ENCODE measurements at regions of chr10 and their contacts with region 1.

Region 1: DNA sequence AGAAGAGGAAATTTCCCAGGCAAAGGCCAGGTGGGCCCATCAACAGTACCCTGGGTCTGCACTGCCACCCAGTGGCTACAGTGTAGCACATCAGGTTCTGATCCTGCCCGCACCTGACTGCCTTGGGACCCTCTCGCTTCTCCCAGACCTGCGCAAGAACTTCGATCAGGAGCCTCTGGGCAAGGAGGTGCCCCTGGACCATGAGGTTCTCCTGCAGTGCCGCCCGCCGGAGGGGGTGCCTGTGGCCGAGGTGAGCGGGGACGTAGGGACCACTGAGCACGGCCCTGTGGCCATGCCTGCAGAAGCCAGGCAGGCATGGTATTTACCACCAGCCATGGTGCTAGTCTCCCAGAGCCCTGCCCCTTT is 33.9 kb upstream of the SLC29A3 start:
- DNase-seq: peak; percentile 41 to 55
- H3K4me3 ChIP-seq: no peak overlapping the region
- H3K27ac ChIP-seq: no peak overlapping the region
- H3K4me1 ChIP-seq: no peaks in the 10 kb centered on the region
- H3K27me3 ChIP-seq: no peaks in the 10 kb centered on the region
- CTCF ChIP-seq: peak; percentile 91

Region 2: DNA sequence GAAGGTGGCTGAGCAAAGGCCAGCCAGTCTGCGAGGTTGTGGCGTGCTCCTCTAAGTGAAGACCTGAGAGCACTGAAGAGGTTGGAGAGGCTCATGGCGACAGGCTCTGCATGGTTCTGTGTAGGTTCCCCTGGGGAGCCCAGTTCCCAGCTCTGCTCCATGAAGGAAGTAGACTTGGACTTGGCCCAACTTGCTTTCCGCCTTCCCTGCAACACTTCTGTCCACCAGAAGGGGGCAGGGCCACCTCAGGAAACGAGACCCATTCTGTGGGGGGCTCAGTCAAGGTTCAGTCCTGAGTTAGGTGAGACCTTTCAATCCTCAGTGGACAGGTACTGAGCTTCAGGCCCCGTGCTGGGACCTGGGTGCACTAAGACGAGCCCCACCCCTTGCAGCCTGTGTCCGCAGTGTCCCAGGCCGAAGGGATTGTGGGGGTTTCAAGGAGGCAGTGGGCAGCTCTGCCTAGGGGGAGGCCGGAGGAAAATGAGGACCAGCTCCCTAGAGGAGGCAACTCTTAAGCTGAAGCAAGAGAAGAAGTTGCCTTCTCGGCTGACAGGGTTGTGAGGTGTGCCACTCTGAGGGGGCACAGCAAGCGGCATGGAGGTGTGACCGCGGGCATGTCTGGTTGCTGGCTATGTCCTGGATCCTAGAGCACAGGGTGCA is 381.8 kb before region 1 on chr10:
- CTCF ChIA-PET with region 1: interaction called, 3 read pairs
- POLR2A ChIA-PET with region 1: interaction called, 5 read pairs
- intact Hi-C with region 1: loop called (anchors 1 kb)
- DNase-seq: peak in 1 of 2 experiments; percentile 55
- H3K4me3 ChIP-seq: no peak overlapping the region
- H3K27ac ChIP-seq: no peak overlapping the region
- H3K4me1 ChIP-seq: 0 out of 2 replicates have a peak, but pooled peaks cover 5% of the 10 kb centered on the region
- H3K27me3 ChIP-seq: peaks cover 28% of the 10 kb centered on the region; the same call in 1 of the 2 replicates
- CTCF ChIP-seq: peak; percentile 99

Region 3: GRCh38 chr10:70925377-70926225 is 359.6 kb before region 1 on chr10:
- CTCF ChIA-PET with region 1: interaction called, 4 read pairs
- POLR2A ChIA-PET with region 1: no interaction called
- intact Hi-C with region 1: loop called (anchors 1 kb)
- DNase-seq: peak in 1 of 2 experiments; percentile 53
- H3K4me3 ChIP-seq: no peak overlapping the region
- H3K27ac ChIP-seq: no peak overlapping the region
- H3K4me1 ChIP-seq: peaks cover 23% of the 10 kb centered on the region
- H3K27me3 ChIP-seq: no peaks in the 10 kb centered on the region
- CTCF ChIP-seq: peak; percentile 98

Region 4: GRCh38 chr10:71319042-71319799 is 34.1 kb after region 1 on chr10 and contains the start of gene SLC29A3:
- CTCF ChIA-PET with region 1: no interaction called
- POLR2A ChIA-PET with region 1: no interaction called
- intact Hi-C with region 1: no loop called
- DNase-seq: peak; percentile 68 to 83
- H3K4me3 ChIP-seq: peak within 1 kb of the TSS; percentile 65
- H3K27ac ChIP-seq: no peak within 1 kb of the TSS
- H3K4me1 ChIP-seq: peaks cover 19% of the 10 kb centered on the region
- H3K27me3 ChIP-seq: no peaks in the 10 kb centered on the region
- CTCF ChIP-seq: peak; percentile 84
- total RNA-seq, gene SLC29A3: 24.1 and 35.7 TPM in 2 replicates

Region 5: DNA sequence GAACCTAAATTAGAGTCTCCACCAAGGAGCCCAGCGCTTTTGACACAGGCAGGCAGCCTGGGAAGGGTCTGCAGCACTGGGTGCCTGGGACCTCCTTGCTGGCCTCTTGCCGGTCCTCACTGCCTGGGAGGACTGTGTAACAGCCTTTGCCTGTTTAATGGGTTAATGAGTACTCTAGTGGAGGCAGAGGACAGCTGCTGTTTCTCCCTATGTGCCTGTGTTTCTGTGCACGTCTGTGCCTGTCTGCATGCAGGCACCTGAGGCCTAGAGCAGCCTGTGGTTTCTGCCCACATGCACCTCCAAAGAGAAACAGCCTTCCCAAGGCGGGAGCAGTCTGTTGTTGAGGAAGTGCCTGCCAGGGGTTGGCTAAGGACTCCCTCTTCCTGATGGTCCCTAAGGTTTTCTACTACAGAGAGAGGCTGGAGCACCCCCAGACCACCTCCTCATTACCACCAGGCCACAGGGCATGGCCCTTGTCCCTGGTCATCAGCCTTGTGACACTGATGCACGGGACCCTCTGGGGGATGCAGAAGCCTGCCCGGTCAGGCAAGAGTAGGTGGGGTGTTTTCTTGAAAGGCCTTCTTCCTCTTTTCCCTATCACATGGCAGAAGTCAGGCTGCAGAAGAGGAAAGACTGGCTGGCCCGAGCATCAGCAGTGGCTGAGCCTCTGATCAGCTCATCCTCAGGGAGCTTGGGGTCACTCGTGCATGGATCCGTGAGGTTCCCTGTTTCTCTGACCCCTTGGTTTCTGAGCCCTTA is 48.1 kb after region 1 on chr10:
- CTCF ChIA-PET with region 1: no interaction called
- POLR2A ChIA-PET with region 1: no interaction called
- intact Hi-C with region 1: no loop called
- DNase-seq: no peak
- H3K4me3 ChIP-seq: no peak overlapping the region
- H3K27ac ChIP-seq: no peak overlapping the region
- H3K4me1 ChIP-seq: peaks cover 35% of the 10 kb centered on the region
- H3K27me3 ChIP-seq: no peaks in the 10 kb centered on the region
- CTCF ChIP-seq: no peak

Measured in PC-9 (cell line).